ENCODE measurements at regions of chr12 and their contacts with region 1.

Region 1: DNA sequence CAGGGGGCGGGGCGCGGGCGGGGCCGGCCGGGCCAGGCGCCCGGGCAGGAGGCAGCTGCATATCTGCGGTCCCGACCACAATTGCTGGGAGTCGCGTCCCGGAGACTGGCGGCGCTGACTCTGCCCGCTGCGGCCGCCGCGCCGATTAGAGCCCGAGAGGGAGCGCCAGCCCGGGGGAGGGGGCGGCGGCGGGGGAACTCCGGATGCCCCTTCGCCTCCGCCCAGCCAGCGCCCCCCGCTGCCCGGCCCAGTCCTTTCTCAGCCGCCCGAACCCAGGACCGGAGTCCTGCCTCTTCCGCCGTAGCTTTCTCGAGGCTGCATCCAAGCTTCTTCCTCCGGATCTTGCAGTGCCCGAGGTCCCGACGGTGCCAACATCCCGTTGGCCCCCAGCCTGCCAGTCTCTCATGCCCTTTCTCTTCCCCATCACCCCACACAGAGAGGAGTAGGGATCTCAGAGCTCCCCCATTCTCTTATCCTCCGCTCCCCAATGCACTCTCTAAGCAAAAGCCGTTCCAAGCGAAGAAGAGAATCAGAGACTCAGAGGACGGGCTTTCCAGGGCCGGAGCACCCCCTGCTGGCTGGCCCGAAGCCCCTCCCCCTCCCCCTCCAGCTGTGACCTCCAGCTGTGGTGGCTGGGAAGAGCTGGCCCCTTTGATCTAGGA is 8.8 kb upstream of the SP7 start:
- DNase-seq: peak; percentile 83 to 93 (median 88)
- ATAC-seq: peak; percentile 97
- H3K4me3 ChIP-seq: peak overlapping the region; percentile 48
- H3K27ac ChIP-seq: no peak overlapping the region
- H3K4me1 ChIP-seq: peaks cover 14 to 23% of the 10 kb centered on the region in 2 experiments; a peak in 4 of 5 replicates
- H3K27me3 ChIP-seq: no peaks in the 10 kb centered on the region
- CTCF ChIP-seq: peak; percentile 84 to 88 (median 87)
- EP300 ChIP-seq: no peak
- POLR2A ChIP-seq: 0 out of 2 replicates have a peak, but pooled peaks have one; percentile 24
- RAD21 ChIP-seq: peak; percentile 92 to 96

Region 2: GRCh38 chr12:53308276-53308675 is 36.7 kb before region 1 on chr12:
- CTCF ChIA-PET with region 1: no interaction called
- POLR2A ChIA-PET with region 1: no interaction called
- in situ Hi-C with region 1: no loop called
- intact Hi-C with region 1: no loop called
- DNase-seq: no peak
- ATAC-seq: no peak
- H3K4me3 ChIP-seq: no peak overlapping the region
- H3K27ac ChIP-seq: peak overlapping the region; percentile 70; the same call in 2 of the 3 replicates
- H3K4me1 ChIP-seq: peaks cover 14 to 17% of the 10 kb centered on the region in 2 experiments; a peak in 4 of 5 replicates
- H3K27me3 ChIP-seq: no peaks in the 10 kb centered on the region
- CTCF ChIP-seq: no peak
- EP300 ChIP-seq: no peak
- POLR2A ChIP-seq: no peak
- RAD21 ChIP-seq: no peak

Region 3: DNA sequence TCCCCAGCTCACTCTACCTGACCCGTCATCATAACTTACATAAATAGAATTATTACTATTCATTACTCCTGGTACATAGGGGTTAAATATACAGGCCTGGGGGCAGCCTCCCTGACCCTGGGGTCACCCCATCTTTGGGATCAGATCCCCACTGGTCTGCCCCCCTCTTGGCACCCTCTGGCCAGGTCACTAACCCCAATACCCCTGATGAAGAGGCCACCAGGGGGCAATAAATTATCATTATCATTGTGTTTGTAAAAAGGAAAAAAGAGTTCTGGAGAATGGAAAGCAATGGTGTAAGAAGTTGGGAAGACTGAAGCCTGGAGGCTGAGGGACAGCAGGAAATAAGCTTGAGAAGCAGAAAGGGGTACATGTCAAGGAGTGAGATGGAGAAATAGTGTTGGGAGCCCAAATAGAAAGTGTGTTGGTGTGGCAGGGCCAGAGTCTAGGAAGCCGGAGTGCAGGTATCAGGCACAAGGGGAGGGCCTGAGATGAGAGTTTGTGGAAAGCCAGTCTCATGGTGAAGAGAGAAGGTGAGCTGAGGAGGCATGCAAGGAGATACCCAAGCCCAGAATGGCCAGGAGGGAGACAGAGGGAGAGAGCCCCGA is 17.4 kb before region 1 on chr12:
- CTCF ChIA-PET with region 1: interaction called, 11 read pairs
- POLR2A ChIA-PET with region 1: interaction called, 9 read pairs
- in situ Hi-C with region 1: no loop called
- intact Hi-C with region 1: loop called (anchors 1 kb)
- DNase-seq: peak in 3 of 4 experiments; percentile 42 to 56 (median 42)
- ATAC-seq: no peak
- H3K4me3 ChIP-seq: no peak overlapping the region
- H3K27ac ChIP-seq: no peak overlapping the region; the same call in 2 of the 3 replicates
- H3K4me1 ChIP-seq: peaks cover 19 to 46% of the 10 kb centered on the region in 2 experiments
- H3K27me3 ChIP-seq: no peaks in the 10 kb centered on the region
- CTCF ChIP-seq: peak; percentile 40 to 64 (median 55); a peak in 5 of 6 replicates
- EP300 ChIP-seq: no peak
- POLR2A ChIP-seq: no peak
- RAD21 ChIP-seq: peak; percentile 49 to 59

Region 4: GRCh38 chr12:53333289-53333688 is 11.7 kb before region 1 on chr12:
- CTCF ChIA-PET with region 1: interaction called, 11 read pairs
- POLR2A ChIA-PET with region 1: interaction called, 12 read pairs
- in situ Hi-C with region 1: no loop called
- intact Hi-C with region 1: no loop called
- DNase-seq: no peak
- ATAC-seq: no peak
- H3K4me3 ChIP-seq: no peak overlapping the region
- H3K27ac ChIP-seq: no peak overlapping the region
- H3K4me1 ChIP-seq: peaks cover 11 to 27% of the 10 kb centered on the region in 2 experiments
- H3K27me3 ChIP-seq: no peaks in the 10 kb centered on the region
- CTCF ChIP-seq: no peak
- EP300 ChIP-seq: no peak
- POLR2A ChIP-seq: no peak
- RAD21 ChIP-seq: no peak

Region 5: DNA sequence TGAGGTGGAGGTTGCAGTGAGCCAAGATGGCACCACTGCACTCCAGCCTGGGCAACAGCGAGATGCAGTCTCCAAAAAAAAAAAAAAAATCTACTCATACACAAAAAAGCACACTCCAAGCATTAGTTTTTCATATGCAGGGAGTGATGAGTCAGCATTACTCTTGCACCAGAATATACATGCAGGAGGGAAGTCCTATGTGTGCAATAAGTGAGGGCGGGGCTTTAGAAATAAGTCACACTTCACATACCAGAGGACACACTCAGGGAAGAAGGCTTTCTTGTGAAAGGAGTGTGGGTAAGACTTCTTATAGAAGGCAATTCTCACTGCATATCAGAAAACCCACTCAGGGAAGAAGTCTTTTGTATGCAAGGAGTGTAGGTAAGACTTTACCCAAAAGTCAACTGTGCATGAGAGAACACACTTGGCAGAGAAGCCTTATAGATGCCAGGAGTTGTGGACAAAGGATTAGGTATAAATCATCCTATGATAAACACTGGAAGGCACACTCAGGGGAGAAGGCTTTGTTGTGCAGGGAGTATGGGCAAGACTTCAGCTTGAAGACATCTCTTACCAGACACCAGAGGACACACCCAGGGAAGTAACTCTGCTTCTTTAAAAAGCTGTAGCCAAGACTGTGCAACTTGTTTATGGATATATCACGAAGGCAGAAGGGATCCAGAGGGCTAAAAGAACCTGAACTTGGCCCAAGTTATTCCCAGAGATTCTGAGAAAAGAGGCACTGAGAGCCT is 230.7 kb after region 1 on chr12:
- CTCF ChIA-PET with region 1: no interaction called
- POLR2A ChIA-PET with region 1: no interaction called
- in situ Hi-C with region 1: no loop called
- intact Hi-C with region 1: no loop called
- DNase-seq: peak; percentile 24 to 31 (median 28)
- ATAC-seq: peak; percentile 50; the same call in 2 of the 3 replicates
- H3K4me3 ChIP-seq: no peak overlapping the region
- H3K27ac ChIP-seq: peak overlapping the region; percentile 7; the same call in 1 of the 3 replicates
- H3K4me1 ChIP-seq: peaks cover 2 to 6% of the 10 kb centered on the region in 2 experiments; a peak in 2 of 5 replicates
- H3K27me3 ChIP-seq: no peaks in the 10 kb centered on the region
- CTCF ChIP-seq: no peak
- EP300 ChIP-seq: no peak
- POLR2A ChIP-seq: no peak
- RAD21 ChIP-seq: no peak